Psoas muscle (tissue), 8 donors: ENCODE measurements at regions of chr3 and their contacts with region 1.

Region 1: DNA sequence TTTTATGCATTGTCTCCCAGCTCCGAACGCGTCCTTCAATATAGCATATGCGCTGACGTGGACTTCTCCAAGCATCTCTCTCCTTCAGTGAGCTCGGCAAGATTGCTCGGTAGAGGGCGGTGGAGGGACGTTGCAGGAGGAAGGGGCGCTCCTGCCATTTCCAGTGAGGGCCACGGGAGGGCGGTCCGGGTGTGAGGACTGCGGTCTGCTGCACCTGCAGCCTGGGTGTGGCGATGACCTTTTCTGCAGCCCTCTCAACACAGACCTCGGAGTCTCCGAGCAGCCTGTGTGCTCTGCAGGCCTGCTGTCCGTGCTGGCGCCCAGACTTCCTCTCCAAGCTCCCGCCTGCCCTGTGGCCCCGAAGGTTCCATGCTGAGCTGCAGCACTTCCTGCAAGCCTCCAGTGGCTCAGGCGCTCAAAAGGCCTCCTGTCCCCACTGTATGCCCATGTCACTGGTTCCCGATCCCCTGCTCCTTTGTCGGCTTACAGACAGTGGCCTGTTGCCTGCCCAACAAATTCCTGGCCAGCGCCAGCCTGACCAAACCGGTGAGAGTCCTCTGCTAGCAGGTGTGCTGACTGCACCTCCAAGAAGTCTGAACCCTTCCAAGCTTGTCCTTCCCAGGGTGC is 8.9 kb upstream of the RTP3 start:
- DNase-seq: peak; percentile 90 to 95
- ATAC-seq: peak; percentile 90 to 94 (median 92)
- H3K4me3 ChIP-seq: no peak overlapping the region
- H3K27ac ChIP-seq: peak overlapping the region; percentile 82
- H3K4me1 ChIP-seq: peaks cover 32% of the 10 kb centered on the region
- H3K27me3 ChIP-seq: no peaks in the 10 kb centered on the region
- CTCF ChIP-seq: peak; percentile 98

Region 2: GRCh38 chr3:46558184-46559043 is 69.6 kb after region 1 on chr3:
- intact Hi-C with region 1: loop called (anchors 1 to 5 kb)
- DNase-seq: peak; percentile 88 to 91
- ATAC-seq: peak; percentile 88 to 94 (median 91)
- H3K4me3 ChIP-seq: peak overlapping the region; percentile 58
- H3K27ac ChIP-seq: peak overlapping the region; percentile 94
- H3K4me1 ChIP-seq: peaks cover 50% of the 10 kb centered on the region
- H3K27me3 ChIP-seq: no peaks in the 10 kb centered on the region
- CTCF ChIP-seq: peak; percentile 66

Region 3: GRCh38 chr3:46566036-46566641 is 77.3 kb after region 1 on chr3 and contains the start of gene LRRC2:
- intact Hi-C with region 1: loop called in 1 of 2 experiments (anchors 2 kb)
- DNase-seq: peak; percentile 61 to 94
- ATAC-seq: peak; percentile 80 to 92 (median 89)
- H3K4me3 ChIP-seq: peak within 1 kb of the TSS; percentile 70
- H3K27ac ChIP-seq: peak within 1 kb of the TSS; percentile 94
- H3K4me1 ChIP-seq: peaks cover 24% of the 10 kb centered on the region
- H3K27me3 ChIP-seq: no peaks in the 10 kb centered on the region
- CTCF ChIP-seq: no peak
- total RNA-seq, gene LRRC2: 65.1 to 160 (median 95.6) TPM

Region 4: DNA sequence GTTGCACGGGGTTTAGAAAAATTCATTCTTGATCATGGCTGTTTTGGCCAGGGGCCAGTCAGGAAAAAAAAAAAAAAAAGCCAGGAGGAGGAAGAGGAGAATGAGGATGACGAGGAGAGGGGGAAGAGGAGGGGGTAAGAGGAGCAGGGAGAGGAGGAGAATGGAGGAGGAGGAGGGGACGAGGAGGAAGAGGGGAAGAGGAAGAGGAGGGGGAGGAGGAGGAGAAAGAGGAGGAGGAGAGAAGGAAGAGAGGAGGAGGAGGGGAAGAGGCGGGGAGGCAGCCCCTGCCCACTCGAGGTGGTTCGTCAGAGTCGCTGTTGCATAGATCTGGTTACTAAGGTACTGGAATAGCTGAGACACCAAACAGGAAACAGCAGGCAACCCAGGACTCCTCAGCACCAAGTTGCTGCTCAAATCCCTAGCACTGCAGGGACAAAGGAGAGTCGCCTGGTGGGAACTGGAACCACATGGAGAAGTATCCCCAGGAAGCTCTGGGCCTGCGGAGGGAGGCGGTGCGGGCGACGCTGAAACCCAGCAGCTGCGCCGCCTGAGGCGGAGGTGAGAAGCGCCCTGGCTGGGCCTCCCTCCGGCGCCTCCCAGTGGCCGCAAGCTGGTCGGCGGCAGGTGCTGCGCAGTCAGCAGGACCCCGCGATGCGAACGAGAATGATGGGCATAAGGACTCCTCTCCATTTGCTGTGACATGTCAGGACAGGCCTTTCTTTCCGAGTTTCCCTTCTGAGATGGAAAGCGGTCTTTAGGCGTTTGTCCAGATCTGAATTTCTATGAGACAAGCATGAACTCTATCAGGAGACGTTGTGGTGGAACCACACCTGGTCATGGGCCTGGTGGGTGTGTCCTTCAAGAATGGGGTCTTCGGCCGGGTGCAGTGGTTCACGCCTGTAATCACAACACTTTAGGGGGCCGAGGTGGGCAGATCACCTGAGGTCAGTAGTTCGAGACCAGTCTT is 141.0 kb after region 1 on chr3:
- intact Hi-C with region 1: loop called (anchors 1 to 2 kb)
- DNase-seq: peak; percentile 82 to 93
- ATAC-seq: peak; percentile 95 to 97 (median 96)
- H3K4me3 ChIP-seq: peak overlapping the region; percentile 57
- H3K27ac ChIP-seq: peak overlapping the region; percentile 86
- H3K4me1 ChIP-seq: peaks cover 12% of the 10 kb centered on the region
- H3K27me3 ChIP-seq: no peaks in the 10 kb centered on the region
- CTCF ChIP-seq: peak; percentile 99